Activated CD4-positive, alpha-beta memory T cell treated with anti-CD3 and anti-CD28 coated beads, Interleukin-2, amount 10 ng/mL, durations not matched to agents 7 days and 5 days (primary cell): ENCODE measurements at regions of chr19 and their contacts with region 1.

Region 1: GRCh38 chr19:16330368-16330801 is 5.8 kb downstream of the KLF2 start:
- DNase-seq: peak; percentile 97
- H3K4me3 Mint-ChIP-seq: peak overlapping the region; percentile 99
- H3K27ac Mint-ChIP-seq: peak overlapping the region; percentile 97
- H3K4me1 Mint-ChIP-seq: peaks cover 58% of the 10 kb centered on the region
- H3K27me3 Mint-ChIP-seq: peaks cover 11% of the 10 kb centered on the region

Region 2: DNA sequence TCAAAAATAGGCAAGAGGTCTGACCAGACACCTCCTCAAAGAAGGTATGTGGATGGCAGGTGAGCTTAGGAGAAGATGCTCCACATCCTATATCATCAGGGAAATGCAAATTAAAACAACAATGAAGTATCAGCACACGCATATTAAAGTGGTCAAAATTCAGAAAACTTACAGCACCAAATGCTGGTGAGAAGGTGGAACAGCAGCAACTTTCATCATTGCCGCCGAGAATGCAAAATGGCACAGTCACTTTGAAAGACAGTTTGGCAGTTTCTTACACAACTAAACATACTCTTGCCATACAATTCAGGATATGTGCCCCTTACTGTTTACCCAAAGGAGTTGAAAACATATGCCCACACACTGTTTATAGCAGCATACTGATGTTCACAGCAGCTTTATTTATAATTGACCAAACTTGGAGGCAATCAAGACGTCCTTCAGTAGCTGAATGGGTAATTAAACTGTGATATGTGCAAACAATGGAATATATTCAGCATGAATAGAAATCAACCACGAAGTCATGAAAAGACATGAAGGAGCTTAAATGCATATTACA is 359.1 kb before region 1 on chr19:
- CTCF ChIA-PET with region 1: no interaction called
- POLR2A ChIA-PET with region 1: no interaction called
- DNase-seq: no peak
- H3K4me3 Mint-ChIP-seq: no peak overlapping the region
- H3K27ac Mint-ChIP-seq: no peak overlapping the region
- H3K4me1 Mint-ChIP-seq: no peaks in the 10 kb centered on the region
- H3K27me3 Mint-ChIP-seq: peaks cover 10% of the 10 kb centered on the region

Region 3: DNA sequence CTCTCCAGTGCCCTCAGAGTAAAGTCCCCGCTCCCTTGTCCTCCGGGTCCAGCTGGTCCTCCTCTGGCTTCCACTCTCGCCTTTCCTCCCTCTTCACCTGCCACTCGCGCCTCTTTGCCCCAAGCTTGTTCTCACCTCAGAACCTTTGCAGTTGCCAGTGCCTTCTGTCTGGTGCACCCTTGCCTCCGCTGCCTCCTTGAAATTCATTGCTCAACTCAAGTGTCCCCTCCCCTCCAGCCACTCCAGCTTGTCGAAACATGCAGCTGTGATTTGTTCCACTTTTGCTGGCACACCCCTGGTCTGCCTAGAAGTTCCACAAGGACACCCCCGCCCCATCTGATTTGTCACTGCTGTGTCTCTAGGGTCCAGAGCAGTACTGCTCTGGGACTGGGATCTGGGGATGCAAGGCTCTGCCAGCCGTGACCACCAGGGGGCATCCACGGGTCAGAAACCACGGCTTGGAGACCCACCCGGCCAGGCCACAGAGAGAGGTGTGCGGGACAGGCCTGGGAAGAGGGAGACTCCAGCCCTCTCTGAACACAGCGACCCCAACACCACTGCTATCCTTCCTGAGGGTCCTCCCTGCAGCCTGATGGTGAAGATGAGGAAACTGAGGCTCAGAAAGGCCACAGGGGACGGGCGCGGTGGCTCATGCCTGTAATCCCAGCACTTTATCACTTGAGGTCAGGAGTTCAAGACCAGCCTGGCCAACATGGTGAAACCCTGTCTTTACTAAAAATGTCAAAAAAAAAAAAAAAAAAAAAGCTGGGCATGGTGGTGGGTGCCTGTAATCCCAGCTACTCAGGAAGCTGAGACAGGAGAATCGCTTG is 82.8 kb before region 1 on chr19:
- CTCF ChIA-PET with region 1: interaction called, 46 read pairs
- POLR2A ChIA-PET with region 1: interaction called, 61 read pairs
- DNase-seq: peak; percentile 87
- H3K4me3 Mint-ChIP-seq: no peak overlapping the region
- H3K27ac Mint-ChIP-seq: peak overlapping the region; percentile 55
- H3K4me1 Mint-ChIP-seq: peaks cover 28% of the 10 kb centered on the region
- H3K27me3 Mint-ChIP-seq: peaks cover 19% of the 10 kb centered on the region

Region 4: DNA sequence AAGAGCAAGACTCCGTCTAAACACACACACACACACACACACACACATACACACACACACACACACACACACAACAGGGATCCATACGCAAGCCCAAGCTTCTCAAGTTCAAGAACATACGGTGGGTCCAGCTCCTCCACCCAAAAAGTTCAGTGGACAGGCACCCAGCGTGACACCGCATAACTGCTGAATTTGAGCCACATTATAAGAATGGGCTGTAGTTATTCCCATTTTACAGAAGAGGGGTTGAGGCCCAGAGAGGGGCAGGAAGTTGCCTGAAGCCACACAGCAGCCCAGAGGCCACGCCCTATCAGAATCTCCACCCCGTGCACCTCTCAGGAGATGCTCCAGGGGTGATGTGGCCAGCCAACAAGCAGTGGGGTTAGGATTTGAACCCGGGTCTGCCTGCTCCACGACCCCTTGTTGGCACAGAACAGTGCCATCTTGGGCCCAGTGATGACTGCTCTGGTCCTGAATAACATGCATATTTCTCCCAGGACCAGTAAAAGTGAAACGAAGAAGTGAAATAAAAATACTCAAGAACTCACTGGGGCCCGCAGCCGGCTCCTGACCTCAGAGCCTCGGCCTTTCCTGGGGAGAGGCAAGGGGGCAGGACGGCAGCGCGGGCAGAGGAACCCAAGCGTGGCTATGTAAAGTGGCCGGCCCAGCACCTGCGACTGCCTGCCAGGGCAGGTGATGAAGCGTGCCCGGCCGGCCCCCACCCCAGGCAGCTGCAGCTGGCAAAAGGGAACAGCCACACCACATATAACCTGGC is 70.8 kb before region 1 on chr19:
- CTCF ChIA-PET with region 1: interaction called, 3 read pairs
- POLR2A ChIA-PET with region 1: interaction called, 68 read pairs
- DNase-seq: peak; percentile 60
- H3K4me3 Mint-ChIP-seq: peak overlapping the region; percentile 27
- H3K27ac Mint-ChIP-seq: peak overlapping the region; percentile 72
- H3K4me1 Mint-ChIP-seq: peaks cover 68% of the 10 kb centered on the region
- H3K27me3 Mint-ChIP-seq: peaks cover 3% of the 10 kb centered on the region

Region 5: DNA sequence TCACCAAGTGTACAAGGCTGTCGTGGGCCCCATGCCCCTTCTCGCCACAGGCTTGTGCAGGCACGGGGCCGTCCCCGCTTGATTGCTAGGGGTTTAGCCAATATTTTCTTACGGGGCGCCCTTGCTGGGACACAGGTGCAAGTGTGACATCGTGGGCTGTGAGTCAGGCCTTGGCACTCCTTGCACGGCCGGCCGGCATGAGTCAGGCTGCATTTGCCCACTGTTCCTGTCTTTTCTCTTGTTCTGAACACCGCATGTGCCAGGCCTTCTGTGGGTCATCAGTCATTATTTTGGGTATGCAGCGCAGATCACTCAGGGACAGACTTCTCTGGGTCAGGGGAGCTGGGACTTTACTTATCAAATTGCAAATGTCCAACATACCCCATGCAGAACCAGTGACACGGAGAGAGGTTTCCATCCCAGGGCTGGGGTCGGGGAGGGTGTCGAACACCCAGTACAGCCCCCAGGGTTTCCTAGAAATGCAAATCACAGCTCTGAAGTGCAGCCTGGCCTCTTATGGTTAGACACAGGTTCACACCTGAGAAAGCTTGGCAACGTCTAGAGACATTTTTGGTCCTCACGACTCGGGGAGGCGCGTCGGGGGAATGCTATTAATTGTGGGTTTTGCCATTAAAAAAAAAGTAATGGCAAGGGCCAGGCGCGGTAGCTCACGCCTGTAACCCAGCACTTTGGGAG is 28.2 kb before region 1 on chr19:
- CTCF ChIA-PET with region 1: no interaction called
- POLR2A ChIA-PET with region 1: no interaction called
- DNase-seq: no peak
- H3K4me3 Mint-ChIP-seq: no peak overlapping the region
- H3K27ac Mint-ChIP-seq: no peak overlapping the region
- H3K4me1 Mint-ChIP-seq: no peaks in the 10 kb centered on the region
- H3K27me3 Mint-ChIP-seq: peaks cover 5% of the 10 kb centered on the region

Region 6: DNA sequence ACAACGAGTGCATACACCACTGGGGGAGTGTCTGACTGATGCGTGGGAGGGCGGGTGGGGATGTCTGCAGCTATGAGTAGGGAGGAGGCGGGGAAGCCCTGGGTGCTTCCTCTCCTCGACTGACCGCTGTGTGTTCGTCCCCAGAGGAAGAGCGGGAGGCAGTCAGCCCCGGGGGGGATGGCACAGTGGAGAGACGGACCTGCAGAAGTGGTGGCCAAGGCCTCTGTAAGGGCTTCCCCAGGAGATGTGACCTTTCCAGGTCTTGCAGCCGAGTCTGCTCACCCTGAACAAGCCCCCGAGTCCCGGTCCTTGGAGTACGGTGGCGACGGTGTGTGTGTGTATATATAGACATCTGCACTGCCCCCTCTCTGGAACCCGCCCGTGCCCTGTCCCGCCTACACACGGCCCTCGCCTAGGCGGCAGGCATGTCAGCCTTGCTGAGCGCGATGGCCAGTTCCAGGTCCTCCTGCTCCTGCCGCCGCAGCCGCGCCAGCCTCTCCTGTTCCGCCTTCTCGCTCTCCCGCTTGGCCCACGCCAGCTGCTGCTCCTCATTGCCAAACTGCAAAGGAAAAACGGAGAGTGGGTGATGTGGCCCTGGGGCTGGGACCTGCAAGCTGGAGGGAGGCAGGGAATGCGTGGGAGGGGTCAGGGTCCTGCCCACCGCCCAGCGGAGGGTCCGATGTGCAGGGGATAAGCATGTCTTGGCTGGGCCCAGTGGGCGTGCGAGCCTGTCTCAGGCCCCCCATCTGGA is 25.1 kb after region 1 on chr19:
- CTCF ChIA-PET with region 1: interaction called, 14 read pairs
- POLR2A ChIA-PET with region 1: interaction called, 3,221 read pairs
- DNase-seq: no peak
- H3K4me3 Mint-ChIP-seq: no peak overlapping the region
- H3K27ac Mint-ChIP-seq: peak overlapping the region; percentile 69
- H3K4me1 Mint-ChIP-seq: peaks cover 80% of the 10 kb centered on the region
- H3K27me3 Mint-ChIP-seq: no peaks in the 10 kb centered on the region

Region 7: DNA sequence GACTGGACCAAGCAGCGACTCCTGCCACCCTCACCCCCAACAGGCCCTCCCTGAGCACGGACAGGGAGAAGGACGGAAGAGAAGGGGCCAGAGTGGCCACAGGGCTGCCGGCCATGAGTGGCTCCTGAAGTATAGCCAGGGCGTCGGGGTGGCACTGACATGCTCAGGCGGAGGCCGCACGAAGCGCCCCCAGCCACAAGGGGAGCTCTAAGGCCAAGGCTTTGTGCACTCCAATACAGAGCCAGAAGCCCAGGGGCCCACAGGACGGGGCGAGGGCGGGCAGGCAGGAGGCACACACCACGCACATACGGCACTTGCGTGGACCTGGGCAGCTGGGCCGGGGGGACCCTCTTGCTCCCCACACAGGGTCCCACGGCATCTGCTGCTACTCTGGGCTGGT is 46.3 kb after region 1 on chr19:
- CTCF ChIA-PET with region 1: interaction called, 113 read pairs
- POLR2A ChIA-PET with region 1: interaction called, 3,221 read pairs
- DNase-seq: peak; percentile 35
- H3K4me3 Mint-ChIP-seq: no peak overlapping the region
- H3K27ac Mint-ChIP-seq: no peak overlapping the region
- H3K4me1 Mint-ChIP-seq: peaks cover 16% of the 10 kb centered on the region
- H3K27me3 Mint-ChIP-seq: no peaks in the 10 kb centered on the region

Region 8: GRCh38 chr19:16584248-16585141 is 254.1 kb after region 1 on chr19:
- CTCF ChIA-PET with region 1: no interaction called
- POLR2A ChIA-PET with region 1: no interaction called
- DNase-seq: peak; percentile 93
- H3K4me3 Mint-ChIP-seq: peak overlapping the region; percentile 77
- H3K27ac Mint-ChIP-seq: peak overlapping the region; percentile 90
- H3K4me1 Mint-ChIP-seq: peaks cover 83% of the 10 kb centered on the region
- H3K27me3 Mint-ChIP-seq: no peaks in the 10 kb centered on the region